Activated naive CD8-positive, alpha-beta T cell treated with anti-CD3 and anti-CD28 coated beads, Interleukin-2, amount 10 ng/mL, durations not matched to agents 7 days and 5 days (primary cell): ENCODE measurements at regions of chr6 and their contacts with region 1.

Region 1: GRCh38 chr6:24910961-24911712 is 24.6 kb downstream of the RIPOR2 start:
- DNase-seq: peak; percentile 70
- ATAC-seq: peak; percentile 31
- H3K4me3 Mint-ChIP-seq: peak overlapping the region; percentile 90
- H3K27ac Mint-ChIP-seq: peak overlapping the region; percentile 89
- H3K4me1 Mint-ChIP-seq: peaks cover 77% of the 10 kb centered on the region
- H3K27me3 Mint-ChIP-seq: no peaks in the 10 kb centered on the region

Region 2: DNA sequence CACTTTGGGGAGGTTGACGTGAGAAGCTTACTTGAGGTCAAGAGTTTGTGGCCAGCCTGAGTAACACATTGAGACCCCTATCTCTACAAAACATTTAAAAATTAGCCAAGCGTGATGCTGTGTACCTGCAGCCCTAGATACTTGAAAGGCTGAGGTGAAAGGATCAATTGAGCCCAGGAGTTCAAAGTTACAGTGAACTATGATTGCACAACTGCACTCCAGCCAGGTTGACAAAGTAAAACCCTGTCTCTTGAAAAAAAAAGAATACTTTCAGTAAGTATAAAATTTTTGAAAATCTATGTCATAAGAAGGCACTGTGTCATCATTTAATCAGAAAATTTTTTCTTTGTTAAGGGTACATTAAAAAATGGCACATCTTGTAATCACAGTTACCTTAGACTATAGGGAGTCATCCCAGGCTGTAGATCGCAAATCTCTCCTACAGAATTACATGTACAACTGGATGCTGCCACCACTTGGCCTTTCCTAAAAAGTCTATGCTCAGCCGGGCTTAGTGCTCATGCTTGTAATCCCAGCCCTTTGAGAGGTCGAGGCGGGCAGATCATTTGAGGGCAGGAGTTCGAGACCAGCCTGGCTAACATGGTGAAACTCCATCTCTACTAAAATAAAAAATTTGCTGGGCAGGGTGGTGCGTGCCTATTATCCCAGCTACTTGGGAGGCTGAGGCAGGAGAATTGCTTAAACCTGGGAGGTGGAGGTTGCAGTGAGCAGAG is 525.4 kb before region 1 on chr6:
- POLR2A ChIA-PET with region 1: no interaction called
- DNase-seq: no peak
- ATAC-seq: no peak
- H3K4me3 Mint-ChIP-seq: no peak overlapping the region
- H3K27ac Mint-ChIP-seq: no peak overlapping the region
- H3K4me1 Mint-ChIP-seq: no peaks in the 10 kb centered on the region
- H3K27me3 Mint-ChIP-seq: peaks cover 19% of the 10 kb centered on the region

Region 3: DNA sequence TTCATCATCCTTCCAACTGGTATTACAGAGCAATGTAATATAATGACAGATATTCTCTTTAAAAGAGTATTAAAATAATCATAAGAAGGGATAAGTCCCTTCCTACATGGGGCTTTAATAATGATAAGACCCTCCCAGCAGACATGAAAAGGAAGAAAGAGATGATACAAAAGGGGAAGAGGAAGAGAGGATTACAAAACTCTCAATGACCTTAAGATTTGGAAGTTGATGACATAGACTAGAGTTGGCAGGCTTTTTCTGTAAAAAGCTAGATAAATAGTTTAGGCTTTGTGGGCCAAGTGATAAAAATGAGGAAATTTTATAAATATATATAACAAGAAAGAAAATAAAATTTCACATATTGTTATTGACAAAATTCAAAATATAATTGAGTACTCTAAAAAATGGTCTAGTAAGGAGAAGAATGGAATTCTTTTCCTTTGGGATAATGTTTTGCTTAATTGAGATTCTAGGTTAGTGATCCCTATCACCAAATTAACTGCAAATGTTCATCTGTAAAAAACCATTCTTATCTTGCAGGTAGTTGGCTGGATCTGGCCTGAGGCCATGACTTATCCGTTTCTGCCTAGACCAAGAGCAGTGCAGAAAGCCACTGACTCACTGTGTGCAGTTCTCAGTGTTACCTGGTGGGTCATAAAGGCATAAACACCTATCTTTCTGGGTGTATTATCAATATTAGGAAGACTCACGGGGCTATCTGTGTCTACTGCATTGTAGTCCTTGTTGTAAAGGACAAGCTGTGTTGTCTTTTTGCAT is 13.6 kb after region 1 on chr6:
- POLR2A ChIA-PET with region 1: interaction called, 50 read pairs
- DNase-seq: no peak
- ATAC-seq: peak; percentile 51
- H3K4me3 Mint-ChIP-seq: peak overlapping the region; percentile 68
- H3K27ac Mint-ChIP-seq: peak overlapping the region; percentile 85
- H3K4me1 Mint-ChIP-seq: peaks cover 64% of the 10 kb centered on the region
- H3K27me3 Mint-ChIP-seq: no peaks in the 10 kb centered on the region

Region 4: GRCh38 chr6:24960991-24961475 is 49.9 kb after region 1 on chr6:
- POLR2A ChIA-PET with region 1: no interaction called
- DNase-seq: no peak
- ATAC-seq: peak; percentile 52
- H3K4me3 Mint-ChIP-seq: peak overlapping the region; percentile 13
- H3K27ac Mint-ChIP-seq: peak overlapping the region; percentile 21
- H3K4me1 Mint-ChIP-seq: peaks cover 40% of the 10 kb centered on the region
- H3K27me3 Mint-ChIP-seq: no peaks in the 10 kb centered on the region

Region 5: GRCh38 chr6:24991810-24992467 is 80.8 kb after region 1 on chr6:
- POLR2A ChIA-PET with region 1: interaction called, 13 read pairs
- DNase-seq: peak; percentile 57
- ATAC-seq: peak; percentile 93
- H3K4me3 Mint-ChIP-seq: peak overlapping the region; percentile 47
- H3K27ac Mint-ChIP-seq: peak overlapping the region; percentile 78
- H3K4me1 Mint-ChIP-seq: peaks cover 34% of the 10 kb centered on the region
- H3K27me3 Mint-ChIP-seq: no peaks in the 10 kb centered on the region

Region 6: GRCh38 chr6:25103603-25104002 is 192.5 kb after region 1 on chr6:
- POLR2A ChIA-PET with region 1: no interaction called
- DNase-seq: no peak
- ATAC-seq: no peak
- H3K4me3 Mint-ChIP-seq: no peak overlapping the region
- H3K27ac Mint-ChIP-seq: no peak overlapping the region
- H3K4me1 Mint-ChIP-seq: no peaks in the 10 kb centered on the region
- H3K27me3 Mint-ChIP-seq: no peaks in the 10 kb centered on the region